ENCODE measurements at regions of chr1 and their contacts with region 1.

Region 1: GRCh38 chr1:157878059-157878458 is 36.5 kb upstream of the CD5L start:
- DNase-seq: no peak
- ATAC-seq: peak; percentile 70
- H3K4me3 ChIP-seq: no peak overlapping the region
- H3K27ac ChIP-seq: no peak overlapping the region
- H3K4me1 ChIP-seq: no peaks in the 10 kb centered on the region
- H3K27me3 ChIP-seq: no peaks in the 10 kb centered on the region
- CTCF ChIP-seq: peak; percentile 34 to 47 (median 45); a peak in 4 of 6 replicates
- EP300 ChIP-seq: no peak
- POLR2A ChIP-seq: no peak
- RAD21 ChIP-seq: peak; percentile 69

Region 2: DNA sequence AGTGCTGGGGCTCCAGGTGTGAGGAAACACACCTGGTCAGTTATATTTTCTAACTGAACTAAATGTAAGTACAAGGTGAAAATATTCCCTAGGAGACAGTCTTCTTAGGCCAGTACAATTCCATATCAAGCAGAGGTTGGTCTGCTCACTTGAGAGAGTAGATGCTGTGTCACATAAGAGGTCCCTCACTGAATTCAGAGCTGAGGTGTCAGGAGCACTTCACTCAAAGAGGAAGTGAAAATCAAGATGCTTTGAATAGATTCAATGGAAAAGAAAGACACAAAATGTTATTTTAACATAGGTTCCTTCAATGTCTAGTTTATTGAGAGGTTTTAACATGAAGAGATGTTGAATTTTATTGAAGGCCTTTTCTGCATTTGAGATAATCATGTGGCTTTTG is 173.2 kb before region 1 on chr1:
- CTCF ChIA-PET with region 1: no interaction called
- POLR2A ChIA-PET with region 1: no interaction called
- RAD21 ChIA-PET with region 1: no interaction called
- SMC1A ChIA-PET with region 1: no interaction called
- in situ Hi-C with region 1: no loop called
- intact Hi-C with region 1: no loop called
- DNase-seq: no peak
- ATAC-seq: peak; percentile 57
- H3K4me3 ChIP-seq: no peak overlapping the region
- H3K27ac ChIP-seq: no peak overlapping the region
- H3K4me1 ChIP-seq: peaks cover 3% of the 10 kb centered on the region; the same call in 1 of the 2 replicates
- H3K27me3 ChIP-seq: peaks cover 0 to 6% of the 10 kb centered on the region in 2 experiments; a peak in 3 of 4 replicates
- CTCF ChIP-seq: no peak
- EP300 ChIP-seq: no peak
- POLR2A ChIP-seq: no peak
- RAD21 ChIP-seq: no peak

Region 3: DNA sequence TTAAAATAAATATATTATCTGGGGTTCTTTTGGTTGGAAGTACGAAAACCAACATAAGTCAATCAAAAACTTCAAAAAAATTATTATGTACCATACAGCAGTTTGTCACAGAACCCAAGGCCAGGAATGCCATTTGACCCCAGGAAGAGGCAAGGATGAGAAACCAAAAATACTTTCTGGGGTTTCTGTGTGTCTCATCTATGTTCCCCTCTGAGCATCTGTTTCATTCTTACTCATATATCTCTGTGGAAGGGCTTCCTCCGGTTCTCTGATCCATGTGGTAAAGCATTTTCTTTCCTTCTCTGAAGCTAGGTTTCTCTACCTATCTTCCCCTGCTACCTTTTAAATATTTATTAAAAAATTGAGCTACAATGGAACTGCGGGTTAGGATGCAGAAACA is 48.3 kb before region 1 on chr1:
- CTCF ChIA-PET with region 1: no interaction called
- POLR2A ChIA-PET with region 1: no interaction called
- RAD21 ChIA-PET with region 1: no interaction called
- SMC1A ChIA-PET with region 1: no interaction called
- in situ Hi-C with region 1: no loop called
- intact Hi-C with region 1: no loop called
- DNase-seq: no peak
- ATAC-seq: peak; percentile 48
- H3K4me3 ChIP-seq: no peak overlapping the region
- H3K27ac ChIP-seq: no peak overlapping the region
- H3K4me1 ChIP-seq: peaks cover 42% of the 10 kb centered on the region
- H3K27me3 ChIP-seq: no peaks in the 10 kb centered on the region; a peak in 1 of 4 replicates
- CTCF ChIP-seq: no peak
- EP300 ChIP-seq: no peak
- POLR2A ChIP-seq: no peak
- RAD21 ChIP-seq: no peak

Region 4: DNA sequence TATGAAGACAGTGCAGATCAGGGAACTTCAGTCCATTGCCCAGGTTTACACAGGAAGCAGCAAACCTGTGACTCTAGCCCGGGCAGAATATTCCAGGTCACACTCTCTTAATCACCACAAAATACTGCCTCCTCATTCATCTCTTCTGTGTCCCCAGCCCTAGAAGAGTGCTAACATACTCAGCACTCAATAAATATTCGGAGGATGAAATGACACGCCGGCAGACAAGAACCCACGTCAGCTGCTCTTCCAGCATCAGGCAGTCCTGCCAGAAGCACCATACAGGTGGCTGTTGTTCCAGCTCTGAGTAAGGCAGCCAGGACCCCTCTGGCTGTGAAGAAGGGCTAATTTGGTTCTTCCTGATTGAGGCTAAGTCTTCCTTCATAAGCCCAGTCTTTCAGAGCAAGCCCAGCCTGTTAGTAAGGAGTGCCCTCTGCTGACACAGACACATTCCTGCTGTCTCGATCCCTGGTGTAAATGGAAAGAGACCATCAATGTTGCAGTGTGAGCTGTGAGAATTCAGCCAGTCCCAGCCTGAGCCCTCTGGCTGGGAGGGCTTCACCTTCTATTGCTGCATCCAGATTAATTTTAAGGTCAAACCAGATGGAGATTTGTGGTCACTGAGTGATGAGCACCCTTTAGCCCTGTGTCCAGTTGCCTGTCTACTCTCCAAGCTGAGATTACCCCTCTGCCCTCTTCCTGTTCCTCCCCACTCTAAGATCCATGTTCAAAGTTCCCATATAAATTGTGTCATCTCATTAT is 70.4 kb after region 1 on chr1:
- CTCF ChIA-PET with region 1: interaction called, 8 read pairs
- POLR2A ChIA-PET with region 1: no interaction called
- RAD21 ChIA-PET with region 1: interaction called, 3 read pairs
- SMC1A ChIA-PET with region 1: interaction called, 3 read pairs
- in situ Hi-C with region 1: no loop called
- intact Hi-C with region 1: loop called (anchors 2 kb)
- DNase-seq: no peak
- ATAC-seq: peak; percentile 59
- H3K4me3 ChIP-seq: no peak overlapping the region
- H3K27ac ChIP-seq: no peak overlapping the region
- H3K4me1 ChIP-seq: peaks cover 3% of the 10 kb centered on the region; the same call in 1 of the 2 replicates
- H3K27me3 ChIP-seq: peaks cover 0 to 7% of the 10 kb centered on the region in 2 experiments; a peak in 2 of 4 replicates
- CTCF ChIP-seq: peak; percentile 53 to 64 (median 56); a peak in 5 of 6 replicates
- EP300 ChIP-seq: no peak
- POLR2A ChIP-seq: no peak
- RAD21 ChIP-seq: peak; percentile 86